ENCODE measurements at regions of chr22 and their contacts with region 1.

Region 1: DNA sequence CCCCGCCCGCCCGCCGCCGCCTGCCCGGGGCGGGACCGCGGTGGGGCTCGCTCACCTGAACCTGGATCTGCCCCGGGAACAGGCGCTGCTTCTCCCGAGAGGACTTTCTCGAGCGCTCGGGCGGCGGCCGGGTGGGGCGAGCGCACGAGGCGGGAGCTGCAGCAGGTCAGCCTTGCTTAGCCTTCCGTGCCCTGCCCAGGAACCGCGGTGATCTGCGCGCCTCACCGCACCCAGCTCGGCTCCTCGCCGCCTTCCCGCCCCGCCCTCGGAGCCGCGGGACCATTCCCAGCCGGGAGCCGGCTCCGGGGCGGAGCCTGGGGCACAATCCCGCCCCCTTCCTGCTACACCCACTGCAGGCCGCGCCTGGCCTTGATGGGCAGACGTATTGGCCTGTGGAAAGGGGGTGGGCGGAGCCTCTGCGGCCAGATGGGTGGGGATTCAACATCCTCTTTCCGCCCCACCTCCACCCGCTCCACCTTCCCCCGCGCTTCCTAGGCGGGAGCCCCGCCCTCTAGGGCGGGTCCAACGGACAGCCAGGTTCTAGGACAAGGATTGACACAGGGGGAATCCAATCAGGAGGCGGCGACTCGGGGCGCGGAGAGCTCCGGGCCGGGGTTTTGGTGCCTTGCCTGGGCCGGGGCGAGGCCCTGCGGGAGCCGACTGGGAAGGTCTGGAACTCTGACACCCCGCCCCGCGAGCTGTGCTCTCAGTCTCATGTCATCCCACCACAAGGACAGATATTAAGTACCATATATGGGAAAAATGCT is at the start of gene MYH9:
- DNase-seq: peak; percentile 100
- ATAC-seq: peak; percentile 90
- H3K4me3 ChIP-seq: peak within 1 kb of the TSS; percentile 75
- H3K27ac ChIP-seq: peak within 1 kb of the TSS; percentile 97
- H3K4me1 ChIP-seq: peaks cover 9% of the 10 kb centered on the region
- H3K27me3 ChIP-seq: no peaks in the 10 kb centered on the region
- CTCF ChIP-seq: no peak
- POLR2A ChIP-seq: peak; percentile 98
- RAD21 ChIP-seq: no peak; the same call in 1 of the 2 replicates
- total RNA-seq, gene MYH9: 554 and 783 TPM in 2 replicates

Region 2: GRCh38 chr22:35812600-35812999 is 575.3 kb before region 1 on chr22:
- CTCF ChIA-PET with region 1: no interaction called
- POLR2A ChIA-PET with region 1: no interaction called
- dilution Hi-C with region 1: no loop called
- in situ Hi-C with region 1: no loop called
- intact Hi-C with region 1: no loop called
- DNase-seq: no peak
- ATAC-seq: no peak
- H3K4me3 ChIP-seq: no peak overlapping the region
- H3K27ac ChIP-seq: no peak overlapping the region
- H3K4me1 ChIP-seq: no peaks in the 10 kb centered on the region
- H3K27me3 ChIP-seq: no peaks in the 10 kb centered on the region
- CTCF ChIP-seq: no peak
- POLR2A ChIP-seq: no peak
- RAD21 ChIP-seq: no peak

Region 3: GRCh38 chr22:35977136-35977535 is 410.8 kb before region 1 on chr22:
- CTCF ChIA-PET with region 1: no interaction called
- POLR2A ChIA-PET with region 1: no interaction called
- dilution Hi-C with region 1: no loop called
- in situ Hi-C with region 1: no loop called
- intact Hi-C with region 1: no loop called
- DNase-seq: peak; percentile 85
- ATAC-seq: peak; percentile 85
- H3K4me3 ChIP-seq: no peak overlapping the region
- H3K27ac ChIP-seq: peak overlapping the region; percentile 41
- H3K4me1 ChIP-seq: peaks cover 27% of the 10 kb centered on the region
- H3K27me3 ChIP-seq: no peaks in the 10 kb centered on the region
- CTCF ChIP-seq: no peak
- POLR2A ChIP-seq: no peak
- RAD21 ChIP-seq: no peak

Region 4: GRCh38 chr22:36301384-36301828 is 86.5 kb before region 1 on chr22:
- CTCF ChIA-PET with region 1: interaction called, 3 read pairs
- POLR2A ChIA-PET with region 1: no interaction called
- dilution Hi-C with region 1: no loop called
- in situ Hi-C with region 1: no loop called
- intact Hi-C with region 1: loop called (anchors 1 kb)
- DNase-seq: peak; percentile 73
- ATAC-seq: peak; percentile 43
- H3K4me3 ChIP-seq: no peak overlapping the region
- H3K27ac ChIP-seq: peak overlapping the region; percentile 94
- H3K4me1 ChIP-seq: peaks cover 21% of the 10 kb centered on the region
- H3K27me3 ChIP-seq: no peaks in the 10 kb centered on the region
- CTCF ChIP-seq: peak; percentile 75
- POLR2A ChIP-seq: peak; percentile 46
- RAD21 ChIP-seq: peak; percentile 69

Region 5: DNA sequence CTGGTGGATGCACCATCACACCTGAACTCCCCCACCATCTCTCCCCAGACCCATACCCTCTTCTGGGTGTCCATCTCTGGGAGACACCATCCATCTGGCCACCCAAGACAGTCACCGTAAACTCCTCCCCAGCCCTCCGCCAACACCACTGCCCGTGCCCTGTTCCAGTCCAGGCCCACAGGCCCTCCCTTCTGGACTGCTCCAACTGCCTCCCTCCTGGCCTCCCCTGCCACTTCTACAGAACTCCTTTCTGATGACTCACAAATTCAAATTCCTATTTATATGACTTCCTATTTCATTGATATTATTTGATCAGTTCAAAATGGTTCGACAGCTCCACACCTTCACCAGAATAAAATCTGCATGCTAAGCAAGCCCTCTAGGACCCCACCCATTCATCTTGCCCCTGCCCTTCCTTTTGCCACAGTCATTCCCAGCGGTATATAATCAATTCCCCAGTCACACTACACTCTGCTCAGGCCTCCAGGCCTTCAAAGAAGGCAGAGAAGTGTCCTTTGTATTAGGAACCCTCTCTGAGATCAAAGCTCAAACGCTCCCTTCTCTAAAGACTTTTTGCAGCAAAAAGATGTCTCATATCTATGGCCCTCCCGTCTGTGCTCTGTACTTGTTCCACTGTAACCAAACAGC is 29.3 kb before region 1 on chr22:
- CTCF ChIA-PET with region 1: no interaction called
- POLR2A ChIA-PET with region 1: interaction called, 5 read pairs
- dilution Hi-C with region 1: no loop called
- in situ Hi-C with region 1: no loop called
- intact Hi-C with region 1: loop called (anchors 1 kb)
- DNase-seq: no peak
- ATAC-seq: peak; percentile 18
- H3K4me3 ChIP-seq: no peak overlapping the region
- H3K27ac ChIP-seq: peak overlapping the region; percentile 70
- H3K4me1 ChIP-seq: peaks cover 64% of the 10 kb centered on the region
- H3K27me3 ChIP-seq: no peaks in the 10 kb centered on the region
- CTCF ChIP-seq: no peak
- POLR2A ChIP-seq: no peak
- RAD21 ChIP-seq: no peak

Region 6: DNA sequence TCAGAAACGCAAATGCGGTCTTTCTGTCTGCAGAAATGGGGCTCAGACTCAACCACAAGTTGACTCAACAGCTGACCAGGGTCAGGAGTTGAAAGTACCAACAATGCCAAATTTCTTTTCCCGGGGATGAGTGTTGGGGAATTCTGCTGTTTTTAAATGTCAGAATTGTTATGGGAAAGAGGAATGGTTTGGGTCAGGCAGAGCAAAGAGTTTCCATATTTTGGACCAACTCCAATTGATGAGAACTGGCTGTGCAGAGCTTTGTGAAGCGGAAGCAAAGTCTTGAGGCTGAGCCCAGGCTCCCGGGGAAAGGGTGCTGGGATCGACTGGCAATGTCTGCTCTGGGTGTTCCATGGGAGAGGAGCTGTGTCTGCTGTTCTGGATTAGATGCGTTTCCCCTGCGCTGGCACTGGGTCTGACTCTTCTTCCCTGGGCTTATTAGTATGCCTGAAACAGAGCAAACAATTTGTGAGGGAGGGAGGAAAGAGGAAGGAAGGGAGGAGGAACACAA is 57.3 kb after region 1 on chr22:
- CTCF ChIA-PET with region 1: no interaction called
- POLR2A ChIA-PET with region 1: interaction called, 7 read pairs
- dilution Hi-C with region 1: no loop called
- in situ Hi-C with region 1: no loop called
- intact Hi-C with region 1: loop called (anchors 1 kb)
- DNase-seq: peak; percentile 97
- ATAC-seq: peak; percentile 75
- H3K4me3 ChIP-seq: no peak overlapping the region
- H3K27ac ChIP-seq: peak overlapping the region; percentile 88
- H3K4me1 ChIP-seq: peaks cover 12% of the 10 kb centered on the region
- H3K27me3 ChIP-seq: no peaks in the 10 kb centered on the region
- CTCF ChIP-seq: no peak
- POLR2A ChIP-seq: no peak
- RAD21 ChIP-seq: no peak

Region 7: GRCh38 chr22:36470162-36470993 is 82.4 kb after region 1 on chr22:
- CTCF ChIA-PET with region 1: interaction called, 14 read pairs
- POLR2A ChIA-PET with region 1: interaction called, 30 read pairs
- dilution Hi-C with region 1: no loop called
- in situ Hi-C with region 1: loop called (anchors 5 kb)
- intact Hi-C with region 1: loop called (anchors 1 kb)
- DNase-seq: peak; percentile 89
- ATAC-seq: peak; percentile 42
- H3K4me3 ChIP-seq: no peak overlapping the region
- H3K27ac ChIP-seq: peak overlapping the region; percentile 97
- H3K4me1 ChIP-seq: peaks cover 44% of the 10 kb centered on the region
- H3K27me3 ChIP-seq: no peaks in the 10 kb centered on the region
- CTCF ChIP-seq: peak; percentile 95
- POLR2A ChIP-seq: peak; percentile 68
- RAD21 ChIP-seq: peak; percentile 99